ENCODE measurements at regions of chr1 and their contacts with region 1.

Region 1: DNA sequence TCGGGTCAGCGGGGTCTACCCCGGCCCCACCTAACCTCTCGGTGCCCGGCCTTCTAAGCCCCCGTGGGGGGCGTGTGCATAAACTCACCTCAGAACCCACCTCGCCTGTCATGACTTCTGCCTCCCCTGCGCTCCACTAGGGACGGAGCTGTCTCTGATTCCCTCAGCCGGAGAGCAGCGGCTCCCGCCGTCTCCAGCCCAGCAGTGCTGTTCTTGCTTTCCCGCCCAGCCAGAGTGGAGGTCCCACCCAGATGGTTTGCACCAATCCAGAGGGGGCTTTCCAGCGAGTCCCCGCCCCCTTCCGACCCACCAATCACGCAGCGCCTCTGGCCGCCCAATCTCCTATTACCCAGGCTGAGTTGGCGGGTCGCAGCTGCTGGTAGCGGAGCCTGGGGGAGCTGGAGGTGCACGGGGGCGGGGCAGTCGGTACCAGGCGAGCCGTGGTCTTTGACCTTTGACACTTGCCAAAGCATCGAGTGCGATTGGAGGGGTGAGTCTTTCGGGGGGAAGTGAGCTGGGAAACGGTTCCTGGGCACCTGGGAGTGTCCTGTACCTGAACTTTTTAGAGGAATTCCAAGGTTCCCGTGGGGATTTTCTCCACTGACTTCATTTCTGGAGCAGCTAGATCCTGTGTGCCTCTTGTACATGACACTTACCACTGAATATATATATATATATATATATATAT is at the start of gene CLSPN:
- DNase-seq: peak; percentile 98
- ATAC-seq: peak; percentile 98
- H3K4me3 Mint-ChIP-seq: peak within 1 kb of the TSS; percentile 91
- H3K27ac Mint-ChIP-seq: peak within 1 kb of the TSS; percentile 97
- H3K4me1 Mint-ChIP-seq: peaks cover 6% of the 10 kb centered on the region
- H3K27me3 Mint-ChIP-seq: no peaks in the 10 kb centered on the region
- total RNA-seq, gene CLSPN: 45.7 to 57.8 TPM

Region 2: GRCh38 chr1:35030756-35031446 is 739.0 kb before region 1 on chr1:
- CTCF ChIA-PET with region 1: no interaction called
- POLR2A ChIA-PET with region 1: interaction called, 3 read pairs
- intact Hi-C with region 1: loop called in 1 of 2 experiments (anchors 5 kb)
- DNase-seq: peak; percentile 63
- ATAC-seq: peak; percentile 70
- H3K4me3 Mint-ChIP-seq: peak overlapping the region; percentile 92
- H3K27ac Mint-ChIP-seq: peak overlapping the region; percentile 92
- H3K4me1 Mint-ChIP-seq: peaks cover 33% of the 10 kb centered on the region
- H3K27me3 Mint-ChIP-seq: no peaks in the 10 kb centered on the region

Region 3: GRCh38 chr1:35539073-35539823 is 230.7 kb before region 1 on chr1:
- CTCF ChIA-PET with region 1: interaction called, 6 read pairs
- POLR2A ChIA-PET with region 1: interaction called, 11 read pairs
- intact Hi-C with region 1: no loop called
- DNase-seq: peak; percentile 48
- ATAC-seq: peak; percentile 76
- H3K4me3 Mint-ChIP-seq: peak overlapping the region; percentile 45
- H3K27ac Mint-ChIP-seq: peak overlapping the region; percentile 92
- H3K4me1 Mint-ChIP-seq: peaks cover 87% of the 10 kb centered on the region
- H3K27me3 Mint-ChIP-seq: no peaks in the 10 kb centered on the region

Region 4: DNA sequence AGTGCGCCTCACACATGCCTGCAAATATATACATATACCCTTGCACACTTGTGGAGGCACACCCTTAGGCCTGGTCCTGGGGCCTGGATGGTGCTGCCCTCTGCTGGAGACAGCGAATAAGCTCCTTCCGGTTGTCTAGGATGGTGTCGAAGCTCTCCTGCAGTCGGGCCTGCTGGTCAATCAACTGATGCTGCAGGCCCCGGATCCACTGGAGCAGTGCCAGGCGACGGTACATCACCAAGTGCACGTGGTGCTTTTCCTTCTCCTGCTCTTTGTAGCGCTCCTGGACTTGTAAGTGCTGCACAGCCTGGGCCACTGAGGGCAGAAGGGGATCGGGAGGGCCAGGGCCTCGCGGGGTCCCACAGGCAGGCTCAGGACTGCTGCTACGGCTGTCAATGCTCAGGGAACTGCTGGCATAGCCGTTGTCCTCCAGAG is 54.3 kb before region 1 on chr1:
- CTCF ChIA-PET with region 1: interaction called, 17 read pairs
- POLR2A ChIA-PET with region 1: interaction called, 4 read pairs
- intact Hi-C with region 1: loop called (anchors 1 to 5 kb)
- DNase-seq: peak; percentile 90
- ATAC-seq: peak; percentile 61
- H3K4me3 Mint-ChIP-seq: peak overlapping the region; percentile 37
- H3K27ac Mint-ChIP-seq: no peak overlapping the region
- H3K4me1 Mint-ChIP-seq: peaks cover 31% of the 10 kb centered on the region
- H3K27me3 Mint-ChIP-seq: no peaks in the 10 kb centered on the region

Region 5: DNA sequence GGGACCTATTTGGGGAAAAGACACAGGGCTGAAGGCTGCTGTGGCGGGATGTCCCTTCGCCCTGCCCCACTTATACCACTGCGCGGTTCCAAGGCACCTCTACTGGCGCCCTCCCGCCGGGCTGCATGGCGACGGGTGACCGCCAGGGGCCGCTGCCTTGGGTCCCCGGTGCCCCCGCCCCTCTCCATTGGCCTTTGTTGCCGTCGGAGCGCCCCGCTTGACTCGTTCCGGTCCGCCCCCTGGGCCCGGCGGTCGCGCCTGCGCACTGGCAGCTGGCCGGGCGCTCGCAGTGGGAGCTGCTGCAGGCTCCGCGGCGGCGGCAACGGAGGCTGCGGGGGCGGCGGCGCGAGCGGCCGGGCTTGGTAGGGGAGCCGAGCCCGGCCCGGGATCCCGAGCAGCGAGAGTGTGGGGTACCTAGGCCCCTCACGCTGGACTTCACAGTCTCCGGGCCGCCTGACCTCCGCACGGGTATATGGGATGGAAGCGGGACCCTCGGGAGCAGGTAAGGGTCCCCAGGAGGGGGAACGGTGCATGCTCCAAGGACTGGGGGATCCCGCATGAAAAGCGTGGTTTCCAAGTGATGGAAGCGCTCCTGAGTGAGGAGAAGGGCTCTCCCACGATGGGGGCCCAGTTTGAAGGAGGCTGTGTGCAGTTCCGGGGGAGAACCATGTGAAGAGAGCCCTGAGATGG is 113.2 kb after region 1 on chr1 and contains the start of gene AGO1:
- CTCF ChIA-PET with region 1: interaction called, 4 read pairs
- POLR2A ChIA-PET with region 1: no interaction called
- intact Hi-C with region 1: loop called in 1 of 2 experiments (anchors 1 kb)
- DNase-seq: peak; percentile 98
- ATAC-seq: peak; percentile 95
- H3K4me3 Mint-ChIP-seq: peak within 1 kb of the TSS; percentile 91
- H3K27ac Mint-ChIP-seq: peak within 1 kb of the TSS; percentile 73
- H3K4me1 Mint-ChIP-seq: peaks cover 46% of the 10 kb centered on the region
- H3K27me3 Mint-ChIP-seq: no peaks in the 10 kb centered on the region
- total RNA-seq, gene AGO1: 31.5 to 34.6 TPM

Region 6: GRCh38 chr1:36008546-36009197 is 238.8 kb after region 1 on chr1:
- CTCF ChIA-PET with region 1: no interaction called
- POLR2A ChIA-PET with region 1: no interaction called
- intact Hi-C with region 1: no loop called
- DNase-seq: peak; percentile 34
- ATAC-seq: peak; percentile 66
- H3K4me3 Mint-ChIP-seq: no peak overlapping the region
- H3K27ac Mint-ChIP-seq: peak overlapping the region; percentile 51
- H3K4me1 Mint-ChIP-seq: peaks cover 4% of the 10 kb centered on the region
- H3K27me3 Mint-ChIP-seq: no peaks in the 10 kb centered on the region

Measured in activated CD4-positive, alpha-beta T cell treated with anti-CD3 and anti-CD28 coated beads for 36 hours (primary cell).